ENCODE measurements at regions of chr7 and their contacts with region 1.

Region 1: DNA sequence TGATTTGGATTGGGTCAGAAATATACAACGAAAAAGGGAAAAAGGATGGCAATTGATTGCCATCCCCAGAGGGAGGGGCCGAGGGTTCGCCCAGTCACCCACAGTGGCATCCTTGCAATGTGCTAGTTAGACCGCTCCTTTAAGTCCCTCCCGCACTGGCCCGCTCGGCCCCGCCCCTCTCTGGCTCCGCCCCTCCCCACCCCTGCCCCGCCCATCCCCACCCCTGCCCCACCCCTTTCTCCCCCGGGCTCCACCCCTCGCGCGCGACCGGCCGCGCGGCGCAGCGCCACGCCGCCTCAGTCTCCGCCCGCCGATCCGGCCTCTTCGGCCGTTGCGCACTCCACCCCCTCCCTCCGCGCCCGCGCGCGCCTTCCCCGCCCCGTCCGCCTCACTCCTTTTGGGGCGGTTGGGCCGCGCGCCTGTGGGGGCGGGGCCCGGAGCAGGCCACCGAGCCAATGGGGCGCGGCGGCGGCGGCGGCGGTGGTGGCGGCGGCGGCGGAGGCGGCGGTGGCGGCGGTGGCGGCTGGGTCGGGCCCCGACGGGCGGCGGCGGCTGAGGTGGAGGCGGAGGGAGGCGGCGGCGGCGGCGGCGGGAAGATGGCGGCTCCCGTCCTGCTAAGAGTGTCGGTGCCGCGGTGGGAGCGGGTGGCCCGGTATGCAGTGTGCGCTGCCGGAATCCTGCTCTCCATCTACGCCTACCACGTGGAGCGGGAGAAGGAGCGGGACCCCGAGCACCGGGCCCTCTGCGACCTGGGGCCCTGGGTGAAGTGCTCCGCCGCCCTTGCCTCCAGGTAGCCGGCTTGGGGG is at the start of gene VKORC1L1:
- DNase-seq: peak; percentile 89
- ATAC-seq: peak; percentile 95
- H3K4me3 ChIP-seq: peak within 1 kb of the TSS; percentile 100
- H3K27ac ChIP-seq: peak within 1 kb of the TSS; percentile 93
- H3K4me1 ChIP-seq: peaks cover 2% of the 10 kb centered on the region
- H3K27me3 ChIP-seq: no peaks in the 10 kb centered on the region
- CTCF ChIP-seq: no peak
- POLR2A ChIP-seq: peak; percentile 46; the same call in 1 of the 2 replicates
- RAD21 ChIP-seq: no peak
- total RNA-seq, gene VKORC1L1: 14.5 and 19.4 TPM in 2 replicates

Region 2: DNA sequence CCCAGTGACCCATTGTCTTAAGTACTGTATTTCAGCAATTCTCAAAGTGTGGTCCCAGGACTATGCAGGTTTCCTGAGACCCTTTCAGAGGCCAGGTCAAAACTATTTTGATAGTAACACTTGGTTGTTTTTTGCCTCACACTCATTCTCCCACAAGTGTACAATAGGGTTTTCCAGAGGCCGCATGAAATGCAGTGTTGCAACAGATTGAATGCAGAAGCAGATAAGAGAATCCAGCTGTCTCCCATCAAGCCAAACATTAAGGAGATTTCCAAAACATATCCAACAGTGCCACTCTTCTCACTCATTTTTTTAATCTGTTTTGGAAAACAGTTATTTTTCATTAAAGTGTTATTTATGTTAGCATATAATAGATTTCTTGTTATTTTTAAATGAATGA is 19.9 kb after region 1 on chr7:
- CTCF ChIA-PET with region 1: no interaction called
- POLR2A ChIA-PET with region 1: no interaction called
- dilution Hi-C with region 1: no loop called
- in situ Hi-C with region 1: no loop called
- intact Hi-C with region 1: loop called (anchors 2 kb)
- DNase-seq: peak; percentile 36
- ATAC-seq: no peak; the same call in 1 of the 2 replicates
- H3K4me3 ChIP-seq: no peak overlapping the region
- H3K27ac ChIP-seq: no peak overlapping the region
- H3K4me1 ChIP-seq: peaks cover 3% of the 10 kb centered on the region; the same call in 1 of the 2 replicates
- H3K27me3 ChIP-seq: no peaks in the 10 kb centered on the region
- CTCF ChIP-seq: no peak
- POLR2A ChIP-seq: no peak
- RAD21 ChIP-seq: no peak

Region 3: DNA sequence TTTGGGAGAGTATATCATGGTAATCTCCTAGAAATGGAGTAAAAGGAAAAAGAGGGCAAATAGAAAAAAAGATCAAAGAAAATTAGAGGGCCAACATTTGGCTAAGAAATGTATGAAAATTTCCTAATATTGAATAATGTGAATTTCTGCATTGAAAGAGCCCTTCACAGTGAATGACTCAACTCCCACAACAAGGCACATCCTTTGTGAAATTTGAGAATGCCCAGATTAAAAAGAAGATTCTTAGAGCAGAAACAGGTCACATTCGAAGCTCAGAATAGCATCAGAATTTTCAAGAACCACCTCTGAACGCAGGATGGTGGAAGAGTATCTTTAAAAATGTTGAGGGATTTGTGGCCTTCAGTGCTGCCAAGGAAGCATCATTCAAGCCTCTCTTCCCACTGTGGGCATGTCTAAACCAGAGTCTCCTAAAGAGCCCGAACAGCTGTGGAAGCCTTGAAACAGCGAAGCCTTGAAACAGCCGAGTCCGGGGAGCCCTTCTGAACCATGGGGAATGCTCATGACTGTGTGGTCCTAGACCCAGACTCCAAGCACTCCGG is 65.4 kb after region 1 on chr7:
- CTCF ChIA-PET with region 1: no interaction called
- POLR2A ChIA-PET with region 1: no interaction called
- dilution Hi-C with region 1: no loop called
- in situ Hi-C with region 1: no loop called
- intact Hi-C with region 1: loop called (anchors 10 kb)
- DNase-seq: peak; percentile 50
- ATAC-seq: peak; percentile 32; the same call in 1 of the 2 replicates
- H3K4me3 ChIP-seq: no peak overlapping the region
- H3K27ac ChIP-seq: no peak overlapping the region
- H3K4me1 ChIP-seq: peaks cover 3% of the 10 kb centered on the region
- H3K27me3 ChIP-seq: no peaks in the 10 kb centered on the region
- CTCF ChIP-seq: no peak
- POLR2A ChIP-seq: no peak
- RAD21 ChIP-seq: no peak

Measured in IMR-90 (cell line).